Activated naive CD4-positive, alpha-beta T cell treated with anti-CD3 and anti-CD28 coated beads for 36 hours (primary cell): ENCODE measurements at regions of chr1 and their contacts with region 1.

Region 1: GRCh38 chr1:53899206-53899628 is 5.2 kb downstream of the DIO1 start:
- DNase-seq: no peak
- H3K4me3 Mint-ChIP-seq: no peak overlapping the region
- H3K27ac Mint-ChIP-seq: no peak overlapping the region
- H3K4me1 Mint-ChIP-seq: peaks cover 4% of the 10 kb centered on the region
- H3K27me3 Mint-ChIP-seq: peaks cover 6% of the 10 kb centered on the region

Region 2: DNA sequence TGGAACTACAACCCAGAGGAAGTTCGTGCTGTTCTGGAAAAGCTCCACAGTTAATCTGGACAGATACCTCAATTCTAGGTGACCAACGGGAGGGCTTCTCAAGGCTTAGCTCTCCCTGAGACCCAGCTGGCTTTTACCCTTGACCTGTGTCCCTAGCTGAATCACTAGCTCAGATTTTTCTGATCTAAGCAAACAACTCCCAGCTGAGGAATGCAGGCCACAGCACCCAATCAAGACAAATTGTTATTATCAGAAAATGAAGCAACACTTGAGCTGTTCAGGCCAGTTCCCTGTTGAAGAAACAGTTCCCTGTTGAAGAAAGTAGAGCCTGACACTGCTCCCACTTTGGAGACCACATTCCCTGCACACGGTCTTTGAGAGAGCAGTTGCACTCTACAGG is 10.7 kb after region 1 on chr1:
- CTCF ChIA-PET with region 1: interaction called, 10 read pairs
- intact Hi-C with region 1: no loop called
- DNase-seq: no peak
- H3K4me3 Mint-ChIP-seq: no peak overlapping the region
- H3K27ac Mint-ChIP-seq: no peak overlapping the region
- H3K4me1 Mint-ChIP-seq: peaks cover 6% of the 10 kb centered on the region
- H3K27me3 Mint-ChIP-seq: no peaks in the 10 kb centered on the region

Region 3: DNA sequence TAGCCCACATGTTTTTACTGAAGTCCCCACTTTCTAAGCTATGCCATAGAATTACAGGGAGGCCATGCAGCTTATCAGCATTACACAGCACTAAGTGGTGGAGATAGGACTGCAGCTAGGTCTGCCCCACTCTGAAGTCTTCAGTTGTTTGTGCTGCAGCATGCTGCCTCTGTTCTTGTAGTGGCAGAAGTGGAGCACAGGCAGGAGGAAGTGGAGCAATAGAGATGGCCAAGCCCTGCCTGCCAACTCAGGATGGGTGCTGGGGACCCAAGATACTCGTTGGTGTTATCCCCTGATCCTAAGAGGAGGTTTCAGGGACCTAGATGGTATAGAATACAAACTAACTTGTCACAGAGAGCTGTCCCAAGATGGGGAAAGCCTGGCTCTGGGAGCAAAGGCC is 313.7 kb after region 1 on chr1:
- CTCF ChIA-PET with region 1: no interaction called
- intact Hi-C with region 1: no loop called
- DNase-seq: no peak
- H3K4me3 Mint-ChIP-seq: no peak overlapping the region
- H3K27ac Mint-ChIP-seq: no peak overlapping the region
- H3K4me1 Mint-ChIP-seq: no peaks in the 10 kb centered on the region
- H3K27me3 Mint-ChIP-seq: no peaks in the 10 kb centered on the region